ENCODE measurements at regions of chr13 and their contacts with region 1.

Region 1: DNA sequence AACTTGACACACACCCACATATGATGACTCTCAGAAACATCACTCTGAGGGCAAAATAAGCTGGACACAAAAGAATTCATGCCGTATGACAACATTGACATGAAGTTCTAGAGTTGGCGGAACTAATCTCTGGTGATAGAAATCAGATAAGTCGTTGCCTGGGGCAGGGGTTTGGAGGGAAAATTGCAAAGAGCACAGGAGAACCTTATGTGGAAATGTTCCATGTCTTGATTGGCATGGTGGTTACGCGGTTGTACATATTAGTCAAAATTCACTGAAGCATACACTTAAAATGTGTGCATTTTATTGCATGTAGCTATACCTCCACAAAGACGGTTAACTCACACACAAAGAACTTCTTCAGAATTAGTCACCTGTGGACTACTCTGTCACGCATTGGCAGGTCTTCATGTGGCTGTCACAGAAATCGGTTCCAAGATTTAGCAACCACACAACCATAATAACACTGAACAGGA is 137.8 kb upstream of the GJB6 start:
- DNase-seq: no peak
- H3K4me3 ChIP-seq: no peak overlapping the region
- H3K27ac ChIP-seq: no peak overlapping the region
- H3K4me1 ChIP-seq: peaks cover 0 to 3% (median 0%) of the 10 kb centered on the region in 3 donors
- H3K27me3 ChIP-seq: no peaks in the 10 kb centered on the region
- CTCF ChIP-seq: no peak

Region 2: GRCh38 chr13:20141238-20142022 is 228.5 kb before region 1 on chr13:
- intact Hi-C with region 1: no loop called
- DNase-seq: peak in 3 of 5 donors; percentile 52 to 79 (median 75)
- H3K4me3 ChIP-seq: no peak overlapping the region
- H3K27ac ChIP-seq: no peak overlapping the region
- H3K4me1 ChIP-seq: no peaks in the 10 kb centered on the region
- H3K27me3 ChIP-seq: peaks cover 9% of the 10 kb centered on the region
- CTCF ChIP-seq: no peak

Region 3: GRCh38 chr13:20264271-20265018 is 105.5 kb before region 1 on chr13:
- intact Hi-C with region 1: no loop called
- DNase-seq: no peak
- H3K4me3 ChIP-seq: no peak overlapping the region
- H3K27ac ChIP-seq: no peak overlapping the region
- H3K4me1 ChIP-seq: no peaks in the 10 kb centered on the region
- H3K27me3 ChIP-seq: no peaks in the 10 kb centered on the region
- CTCF ChIP-seq: no peak

Region 4: GRCh38 chr13:20301403-20302071 is 68.4 kb before region 1 on chr13:
- intact Hi-C with region 1: loop called (anchors 10 kb)
- DNase-seq: peak in 4 of 5 donors; percentile 49 to 66 (median 60)
- H3K4me3 ChIP-seq: no peak overlapping the region
- H3K27ac ChIP-seq: no peak overlapping the region
- H3K4me1 ChIP-seq: no peaks in the 10 kb centered on the region
- H3K27me3 ChIP-seq: no peaks in the 10 kb centered on the region
- CTCF ChIP-seq: no peak

Region 5: DNA sequence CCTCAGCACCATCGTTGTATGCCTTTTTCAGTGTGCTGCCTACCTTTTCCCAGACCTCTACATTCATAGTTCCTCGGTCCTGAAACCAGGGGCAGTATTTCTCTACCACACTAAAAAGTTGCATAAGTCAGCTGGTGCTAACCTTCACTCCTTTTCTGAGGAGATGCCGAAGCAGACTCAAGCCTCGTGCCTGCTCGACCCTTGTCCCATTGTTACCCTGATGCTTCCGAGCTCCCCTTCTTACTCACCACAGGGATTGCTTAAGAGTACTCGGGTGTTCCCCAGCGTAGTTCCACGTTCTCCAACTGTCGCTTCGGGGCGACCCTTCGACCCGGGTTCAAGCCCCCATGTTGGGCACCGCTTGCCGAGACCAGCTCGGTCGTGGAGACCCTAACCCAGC is 314.6 kb after region 1 on chr13:
- intact Hi-C with region 1: no loop called
- DNase-seq: peak in 1 of 5 donors; percentile 6
- H3K4me3 ChIP-seq: no peak overlapping the region
- H3K27ac ChIP-seq: no peak overlapping the region
- H3K4me1 ChIP-seq: no peaks in the 10 kb centered on the region
- H3K27me3 ChIP-seq: no peaks in the 10 kb centered on the region
- CTCF ChIP-seq: no peak

Region 6: DNA sequence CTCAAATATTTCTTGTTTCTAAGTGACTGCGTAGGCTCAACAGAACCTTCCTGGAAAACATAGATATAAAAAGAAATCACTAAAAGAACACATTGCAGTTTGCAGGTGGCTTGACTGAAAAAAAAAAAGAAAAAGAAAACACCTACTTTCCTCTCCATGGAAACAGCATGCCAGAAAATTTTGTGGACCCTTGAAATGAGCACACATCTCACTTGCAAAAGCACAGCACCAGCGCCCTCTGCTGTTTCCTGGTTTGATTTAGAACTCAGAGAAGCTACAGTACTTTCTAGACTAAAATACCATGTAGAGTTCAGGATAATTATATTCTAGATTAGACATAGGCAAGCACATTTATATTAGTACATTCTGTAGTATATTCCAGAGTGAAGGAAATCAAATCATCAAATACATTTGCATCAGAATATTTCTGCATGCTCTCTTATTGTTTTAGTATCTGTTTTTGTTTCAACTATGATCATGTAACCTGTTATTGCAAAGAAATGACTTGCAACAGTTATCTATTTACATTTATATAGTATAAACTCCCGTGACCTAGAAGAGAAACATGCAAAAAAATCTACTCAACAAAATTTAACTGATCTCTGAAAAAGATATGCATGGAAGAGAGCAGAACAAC is 555.0 kb after region 1 on chr13:
- intact Hi-C with region 1: no loop called
- DNase-seq: peak in 4 of 5 donors; percentile 80 to 96 (median 91)
- H3K4me3 ChIP-seq: no peak overlapping the region
- H3K27ac ChIP-seq: no peak overlapping the region
- H3K4me1 ChIP-seq: no peaks in the 10 kb centered on the region
- H3K27me3 ChIP-seq: no peaks in the 10 kb centered on the region
- CTCF ChIP-seq: peak; percentile 66